ENCODE measurements at regions of chr5 and their contacts with region 1.

Region 1: GRCh38 chr5:112707187-112708102 is 30.2 kb upstream of the APC start:
- DNase-seq: peak; percentile 98
- ATAC-seq: peak; percentile 97
- H3K4me3 Mint-ChIP-seq: peak overlapping the region; percentile 83
- H3K27ac Mint-ChIP-seq: peak overlapping the region; percentile 90
- H3K4me1 Mint-ChIP-seq: peaks cover 54% of the 10 kb centered on the region
- H3K27me3 Mint-ChIP-seq: no peaks in the 10 kb centered on the region

Region 2: DNA sequence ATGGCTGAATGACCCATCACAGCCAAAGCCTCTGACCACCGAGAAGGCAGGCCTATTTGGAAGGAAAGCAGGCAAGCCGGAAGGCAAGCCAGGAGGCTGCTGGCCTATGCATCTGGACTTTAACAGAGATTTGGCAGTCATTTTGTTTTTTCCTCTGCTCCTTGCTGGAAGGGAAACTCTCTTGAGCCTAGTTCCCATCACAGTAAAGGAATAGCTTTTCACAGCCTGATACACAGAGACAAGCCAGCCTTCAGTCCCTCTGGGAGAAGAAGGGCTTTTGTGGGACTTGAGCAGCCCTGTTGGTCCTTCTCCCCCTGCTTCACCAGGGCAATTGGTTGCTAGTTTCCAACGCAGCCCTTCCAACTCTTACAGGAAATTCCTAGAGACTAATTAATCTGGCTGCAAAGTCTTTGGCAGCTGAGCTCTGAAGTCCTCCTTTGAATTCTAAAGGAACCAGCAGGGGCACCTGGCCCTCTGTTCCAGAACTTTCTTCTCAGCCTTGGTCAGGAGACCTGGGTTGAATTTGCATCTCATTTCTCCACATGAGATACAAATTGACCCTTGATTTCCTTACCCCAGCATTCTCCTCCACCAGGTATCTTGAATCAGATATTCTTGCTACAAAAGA is 131.0 kb before region 1 on chr5:
- CTCF ChIA-PET with region 1: no interaction called
- POLR2A ChIA-PET with region 1: no interaction called
- intact Hi-C with region 1: no loop called
- DNase-seq: no peak
- ATAC-seq: no peak
- H3K4me3 Mint-ChIP-seq: no peak overlapping the region
- H3K27ac Mint-ChIP-seq: no peak overlapping the region
- H3K4me1 Mint-ChIP-seq: no peaks in the 10 kb centered on the region
- H3K27me3 Mint-ChIP-seq: no peaks in the 10 kb centered on the region

Region 3: DNA sequence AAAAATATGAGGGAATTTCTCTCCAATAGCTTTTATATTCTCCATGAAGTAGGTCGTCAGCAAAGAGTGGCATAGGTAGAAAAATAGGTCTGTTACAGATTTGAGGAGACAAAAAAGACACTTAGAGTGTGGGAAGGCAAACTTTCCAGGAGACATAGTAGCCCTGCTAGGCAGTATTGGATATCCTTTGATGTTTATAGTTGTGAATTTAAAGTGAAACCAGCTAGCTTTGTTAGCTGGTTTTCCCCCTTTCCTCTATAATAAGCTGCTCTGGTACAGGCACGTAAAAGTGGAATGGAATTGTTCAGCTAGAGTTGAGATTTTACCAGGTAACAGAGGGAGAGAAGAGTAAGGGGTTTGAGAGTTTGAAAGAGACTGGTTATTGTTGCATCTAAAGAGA is 13.1 kb after region 1 on chr5:
- CTCF ChIA-PET with region 1: interaction called, 12 read pairs
- POLR2A ChIA-PET with region 1: no interaction called
- intact Hi-C with region 1: no loop called
- DNase-seq: no peak
- ATAC-seq: peak; percentile 49
- H3K4me3 Mint-ChIP-seq: no peak overlapping the region
- H3K27ac Mint-ChIP-seq: no peak overlapping the region
- H3K4me1 Mint-ChIP-seq: peaks cover 50% of the 10 kb centered on the region
- H3K27me3 Mint-ChIP-seq: no peaks in the 10 kb centered on the region

Region 4: GRCh38 chr5:112752335-112752734 is 44.9 kb after region 1 on chr5:
- CTCF ChIA-PET with region 1: interaction called, 6 read pairs
- POLR2A ChIA-PET with region 1: no interaction called
- intact Hi-C with region 1: loop called in 1 of 2 experiments (anchors 5 kb)
- DNase-seq: no peak
- ATAC-seq: no peak
- H3K4me3 Mint-ChIP-seq: no peak overlapping the region
- H3K27ac Mint-ChIP-seq: no peak overlapping the region
- H3K4me1 Mint-ChIP-seq: no peaks in the 10 kb centered on the region
- H3K27me3 Mint-ChIP-seq: no peaks in the 10 kb centered on the region

Region 5: DNA sequence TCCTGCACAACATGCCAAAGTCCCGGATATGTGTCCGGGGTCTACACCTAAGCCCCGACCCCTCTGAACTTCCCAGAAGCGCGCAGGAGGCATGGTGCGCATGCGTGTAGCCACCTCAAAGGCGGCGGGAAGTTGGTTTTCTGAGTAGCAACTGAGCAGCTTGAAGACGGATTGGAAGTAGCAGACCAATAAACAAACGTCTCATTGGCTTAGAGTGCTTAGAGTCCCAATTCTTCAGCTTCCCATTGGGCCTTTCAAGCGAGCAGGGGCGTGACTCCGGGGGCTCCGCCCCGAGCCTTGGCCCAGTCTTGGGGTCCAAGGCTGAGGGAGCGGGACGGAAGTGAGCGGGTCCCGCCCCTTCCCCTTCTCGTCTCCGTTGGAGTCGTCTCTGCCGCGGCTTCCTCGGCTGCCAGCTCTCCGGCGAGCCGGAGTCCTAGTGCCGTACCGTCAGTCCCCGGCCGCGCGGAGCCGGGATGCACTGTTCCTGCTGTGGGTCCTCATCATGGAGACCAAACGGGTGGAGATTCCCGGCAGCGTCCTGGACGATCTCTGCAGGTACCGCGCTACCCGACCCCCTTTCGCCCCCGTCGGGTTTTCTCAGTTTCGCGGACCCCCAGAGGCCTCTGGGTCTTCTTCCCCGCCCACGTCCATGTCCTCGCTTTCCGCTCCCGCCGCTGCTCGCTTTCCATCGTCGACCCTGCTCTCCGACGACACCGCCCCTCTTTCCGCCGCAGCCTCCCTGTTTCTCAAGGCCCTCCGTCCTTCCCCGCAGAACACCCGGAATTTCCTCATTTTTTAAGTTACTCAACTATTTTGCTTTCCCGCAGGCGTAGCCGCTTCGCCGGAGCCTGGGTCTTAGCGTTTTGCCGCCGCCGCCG is 269.2 kb after region 1 on chr5 and contains the start of gene DCP2:
- CTCF ChIA-PET with region 1: no interaction called
- POLR2A ChIA-PET with region 1: no interaction called
- intact Hi-C with region 1: loop called (anchors 1 to 5 kb)
- DNase-seq: peak; percentile 96
- ATAC-seq: peak; percentile 94
- H3K4me3 Mint-ChIP-seq: peak within 1 kb of the TSS; percentile 99
- H3K27ac Mint-ChIP-seq: peak within 1 kb of the TSS; percentile 98
- H3K4me1 Mint-ChIP-seq: peaks cover 39% of the 10 kb centered on the region
- H3K27me3 Mint-ChIP-seq: no peaks in the 10 kb centered on the region
- total RNA-seq, gene DCP2: 94.0 to 101 TPM